ENCODE measurements at regions of chr7 and their contacts with region 1.

Region 1: DNA sequence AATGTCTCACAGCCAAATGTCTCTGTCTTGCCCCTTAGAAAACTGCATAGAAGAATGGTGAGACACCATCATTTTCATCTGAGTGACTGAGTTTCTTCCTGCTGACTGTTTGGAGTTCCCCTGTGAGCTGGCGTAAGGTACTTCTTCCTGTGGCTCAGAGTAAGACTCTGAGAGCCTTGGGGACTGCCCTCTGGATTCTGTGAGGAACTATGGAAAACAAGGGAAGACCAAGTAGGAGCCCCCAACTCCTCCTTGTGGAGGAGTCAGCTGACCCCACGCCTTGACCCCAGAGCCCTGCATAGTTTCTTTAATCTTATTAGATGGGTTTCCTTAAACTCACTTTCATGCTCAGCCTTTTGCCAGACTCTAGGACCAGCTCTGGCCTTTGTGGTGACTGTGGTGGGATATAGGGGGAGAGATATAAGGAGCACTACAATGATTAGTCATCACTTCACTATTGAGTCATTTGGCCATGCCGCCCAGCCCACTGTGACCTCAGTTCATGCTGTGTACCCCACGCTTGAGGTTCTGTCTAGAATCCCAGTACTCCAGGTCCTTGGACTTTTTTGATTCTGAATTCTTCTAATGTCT is 51.8 kb upstream of the FAM133B start:
- DNase-seq: peak; percentile 87
- ATAC-seq: peak; percentile 71
- H3K4me3 Mint-ChIP-seq: peak overlapping the region; percentile 9
- H3K27ac Mint-ChIP-seq: peak overlapping the region; percentile 92
- H3K4me1 Mint-ChIP-seq: peaks cover 86% of the 10 kb centered on the region
- H3K27me3 Mint-ChIP-seq: no peaks in the 10 kb centered on the region
- CTCF ChIP-seq: no peak

Region 2: DNA sequence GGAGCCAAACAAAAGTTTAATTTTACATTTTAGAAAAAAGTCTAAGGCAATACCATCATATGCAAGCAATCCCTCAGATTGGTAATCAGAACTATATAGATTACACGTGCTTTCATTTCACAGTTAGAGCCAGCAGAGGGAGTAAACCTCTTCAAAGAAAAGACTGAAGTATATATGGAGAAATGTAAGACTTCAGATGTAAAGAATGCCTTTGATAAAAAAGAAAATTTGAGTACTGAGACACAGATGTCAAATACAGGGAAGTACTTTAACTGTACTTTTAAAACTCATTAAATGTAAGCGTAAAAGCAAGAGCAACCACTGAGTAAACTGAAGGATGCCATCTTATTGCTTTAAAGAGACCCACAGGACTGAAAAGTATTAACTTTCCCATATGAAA is 49.6 kb after region 1 on chr7:
- CTCF ChIA-PET with region 1: no interaction called
- POLR2A ChIA-PET with region 1: no interaction called
- intact Hi-C with region 1: no loop called
- DNase-seq: peak; percentile 40
- ATAC-seq: peak; percentile 92
- H3K4me3 Mint-ChIP-seq: no peak overlapping the region
- H3K27ac Mint-ChIP-seq: peak overlapping the region; percentile 59
- H3K4me1 Mint-ChIP-seq: peaks cover 56% of the 10 kb centered on the region
- H3K27me3 Mint-ChIP-seq: no peaks in the 10 kb centered on the region
- CTCF ChIP-seq: peak; percentile 66

Region 3: DNA sequence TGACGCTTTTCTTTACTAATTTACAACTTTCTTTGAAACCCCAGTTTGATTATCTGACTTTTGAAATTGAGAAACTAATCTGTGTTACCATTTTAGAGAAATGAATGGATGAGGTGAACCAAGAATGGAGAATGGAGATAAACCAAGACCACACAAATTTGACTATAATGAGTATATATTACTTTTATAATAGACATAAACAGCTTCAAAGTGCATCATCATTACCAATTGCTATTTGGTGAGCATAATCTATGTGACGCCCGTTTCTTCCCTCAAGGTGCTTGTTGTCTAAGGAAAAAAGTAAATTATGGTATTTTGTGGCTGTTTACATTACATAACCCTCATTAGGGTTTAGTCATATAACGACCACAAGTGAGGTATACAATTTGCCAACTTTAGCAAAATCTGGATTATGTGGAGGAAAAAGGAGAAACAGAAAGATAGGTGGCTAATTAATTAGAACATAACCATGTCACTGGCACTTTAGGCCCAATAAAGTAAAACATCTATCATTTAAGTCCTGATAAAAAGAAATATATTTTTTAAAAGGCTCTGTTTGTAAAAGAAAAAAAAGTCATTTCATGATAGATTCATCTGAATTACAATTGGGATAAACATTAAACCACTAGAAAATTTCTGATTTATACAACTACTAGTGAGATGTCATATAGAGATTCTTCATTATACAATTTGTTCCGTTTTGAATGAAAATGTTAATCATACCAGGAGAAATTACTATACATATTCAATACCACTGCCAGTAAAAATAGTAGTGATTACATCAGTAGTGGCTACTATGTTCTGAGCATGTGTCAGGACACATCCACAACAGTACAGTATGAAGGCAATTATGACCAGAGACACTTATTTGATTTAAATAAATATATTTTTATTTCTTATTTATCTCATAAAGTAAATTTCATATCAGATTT is 66.4 kb after region 1 on chr7:
- CTCF ChIA-PET with region 1: no interaction called
- POLR2A ChIA-PET with region 1: no interaction called
- intact Hi-C with region 1: loop called (anchors 1 kb)
- DNase-seq: no peak
- ATAC-seq: peak; percentile 76
- H3K4me3 Mint-ChIP-seq: no peak overlapping the region
- H3K27ac Mint-ChIP-seq: peak overlapping the region; percentile 81
- H3K4me1 Mint-ChIP-seq: peaks cover 45% of the 10 kb centered on the region
- H3K27me3 Mint-ChIP-seq: no peaks in the 10 kb centered on the region
- CTCF ChIP-seq: no peak

Measured in activated CD8-positive, alpha-beta T cell treated with anti-CD3 and anti-CD28 coated beads for 36 hours (primary cell).